ENCODE measurements at regions of chr5 and their contacts with region 1.

Region 1: GRCh38 chr5:73454351-73455036 is 5.9 kb upstream of the FOXD1 start:
- DNase-seq: peak in 3 of 5 donors; percentile 33 to 59 (median 44)
- H3K4me3 ChIP-seq: no peak overlapping the region
- H3K4me3 Mint-ChIP-seq: no peak overlapping the region
- H3K27ac ChIP-seq: no peak overlapping the region
- H3K27ac Mint-ChIP-seq: peak overlapping the region in 1 of 7 donors; percentile 53
- H3K4me1 ChIP-seq: peaks cover 5% of the 10 kb centered on the region
- H3K4me1 Mint-ChIP-seq: peaks cover 3 to 22% (median 6%) of the 10 kb centered on the region in 4 donors
- H3K27me3 ChIP-seq: peaks cover 42% of the 10 kb centered on the region
- H3K27me3 Mint-ChIP-seq: peaks cover 46 to 54% of the 10 kb centered on the region in 2 donors

Region 2: GRCh38 chr5:73088026-73088425 is 366.5 kb before region 1 on chr5:
- CTCF ChIA-PET with region 1: interaction called, 20 read pairs
- POLR2A ChIA-PET with region 1: no interaction called
- intact Hi-C with region 1: loop called (anchors 1 kb)
- DNase-seq: no peak
- H3K4me3 ChIP-seq: no peak overlapping the region
- H3K4me3 Mint-ChIP-seq: no peak overlapping the region
- H3K27ac ChIP-seq: no peak overlapping the region
- H3K27ac Mint-ChIP-seq: no peak overlapping the region
- H3K4me1 ChIP-seq: no peaks in the 10 kb centered on the region
- H3K4me1 Mint-ChIP-seq: no peaks in the 10 kb centered on the region
- H3K27me3 ChIP-seq: no peaks in the 10 kb centered on the region
- H3K27me3 Mint-ChIP-seq: peaks cover 0 to 1% of the 10 kb centered on the region in 2 donors

Region 3: GRCh38 chr5:73290242-73290641 is 164.3 kb before region 1 on chr5:
- CTCF ChIA-PET with region 1: interaction called, 13 read pairs
- POLR2A ChIA-PET with region 1: no interaction called
- intact Hi-C with region 1: no loop called
- DNase-seq: no peak
- H3K4me3 ChIP-seq: no peak overlapping the region
- H3K4me3 Mint-ChIP-seq: no peak overlapping the region
- H3K27ac ChIP-seq: no peak overlapping the region
- H3K27ac Mint-ChIP-seq: no peak overlapping the region
- H3K4me1 ChIP-seq: no peaks in the 10 kb centered on the region
- H3K4me1 Mint-ChIP-seq: no peaks in the 10 kb centered on the region
- H3K27me3 ChIP-seq: no peaks in the 10 kb centered on the region
- H3K27me3 Mint-ChIP-seq: peaks cover 44 to 49% of the 10 kb centered on the region in 2 donors

Region 4: GRCh38 chr5:73312146-73312871 is 142.2 kb before region 1 on chr5:
- CTCF ChIA-PET with region 1: interaction called, 8 read pairs
- POLR2A ChIA-PET with region 1: no interaction called
- intact Hi-C with region 1: loop called (anchors 1 kb)
- DNase-seq: peak in 2 of 5 donors; percentile 25 to 30
- H3K4me3 ChIP-seq: no peak overlapping the region
- H3K4me3 Mint-ChIP-seq: no peak overlapping the region
- H3K27ac ChIP-seq: no peak overlapping the region
- H3K27ac Mint-ChIP-seq: no peak overlapping the region
- H3K4me1 ChIP-seq: no peaks in the 10 kb centered on the region
- H3K4me1 Mint-ChIP-seq: peaks cover 3 to 11% (median 5%) of the 10 kb centered on the region in 4 donors
- H3K27me3 ChIP-seq: peaks cover 41% of the 10 kb centered on the region
- H3K27me3 Mint-ChIP-seq: peaks cover 55 to 69% of the 10 kb centered on the region in 2 donors

Region 5: GRCh38 chr5:73442231-73442811 is 12.2 kb before region 1 on chr5:
- CTCF ChIA-PET with region 1: interaction called, 24 read pairs
- POLR2A ChIA-PET with region 1: interaction called, 3 read pairs
- intact Hi-C with region 1: no loop called
- DNase-seq: no peak
- H3K4me3 ChIP-seq: no peak overlapping the region
- H3K4me3 Mint-ChIP-seq: peak overlapping the region in 1 of 8 donors; percentile 18
- H3K27ac ChIP-seq: no peak overlapping the region
- H3K27ac Mint-ChIP-seq: peak overlapping the region in 1 of 7 donors; percentile 78
- H3K4me1 ChIP-seq: peaks cover 15% of the 10 kb centered on the region
- H3K4me1 Mint-ChIP-seq: peaks cover 0 to 11% (median 2%) of the 10 kb centered on the region in 4 donors
- H3K27me3 ChIP-seq: peaks cover 89% of the 10 kb centered on the region
- H3K27me3 Mint-ChIP-seq: peaks cover 58 to 62% of the 10 kb centered on the region in 2 donors

Region 6: DNA sequence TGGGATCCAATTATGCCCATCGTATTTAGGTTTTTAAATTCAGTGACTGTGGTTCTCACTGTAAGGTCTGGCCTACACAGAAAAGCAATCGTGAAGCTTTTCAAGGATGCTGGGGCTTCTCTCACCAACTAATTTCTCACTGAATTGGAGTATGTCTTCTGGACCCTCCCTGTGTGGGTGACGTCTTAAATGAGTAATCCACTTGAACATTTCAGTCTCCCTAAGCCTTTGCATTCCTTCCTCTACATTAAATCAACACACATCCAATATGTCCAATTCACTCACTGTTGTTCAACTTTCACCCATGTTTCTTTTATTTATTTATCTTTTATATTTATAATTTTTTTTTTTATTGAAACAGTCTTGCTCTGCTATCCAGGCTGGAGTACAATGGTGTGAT is 31.2 kb after region 1 on chr5:
- CTCF ChIA-PET with region 1: no interaction called
- POLR2A ChIA-PET with region 1: no interaction called
- intact Hi-C with region 1: no loop called
- DNase-seq: no peak
- H3K4me3 ChIP-seq: no peak overlapping the region
- H3K4me3 Mint-ChIP-seq: no peak overlapping the region
- H3K27ac ChIP-seq: no peak overlapping the region
- H3K27ac Mint-ChIP-seq: no peak overlapping the region
- H3K4me1 ChIP-seq: no peaks in the 10 kb centered on the region
- H3K4me1 Mint-ChIP-seq: no peaks in the 10 kb centered on the region
- H3K27me3 ChIP-seq: no peaks in the 10 kb centered on the region
- H3K27me3 Mint-ChIP-seq: peaks cover 5 to 15% of the 10 kb centered on the region in 2 donors

Measured in CD4-positive, alpha-beta memory T cell (primary cell).